Left colon (tissue), 2 donors: ENCODE measurements at regions of chr2 and their contacts with region 1.

Region 1: DNA sequence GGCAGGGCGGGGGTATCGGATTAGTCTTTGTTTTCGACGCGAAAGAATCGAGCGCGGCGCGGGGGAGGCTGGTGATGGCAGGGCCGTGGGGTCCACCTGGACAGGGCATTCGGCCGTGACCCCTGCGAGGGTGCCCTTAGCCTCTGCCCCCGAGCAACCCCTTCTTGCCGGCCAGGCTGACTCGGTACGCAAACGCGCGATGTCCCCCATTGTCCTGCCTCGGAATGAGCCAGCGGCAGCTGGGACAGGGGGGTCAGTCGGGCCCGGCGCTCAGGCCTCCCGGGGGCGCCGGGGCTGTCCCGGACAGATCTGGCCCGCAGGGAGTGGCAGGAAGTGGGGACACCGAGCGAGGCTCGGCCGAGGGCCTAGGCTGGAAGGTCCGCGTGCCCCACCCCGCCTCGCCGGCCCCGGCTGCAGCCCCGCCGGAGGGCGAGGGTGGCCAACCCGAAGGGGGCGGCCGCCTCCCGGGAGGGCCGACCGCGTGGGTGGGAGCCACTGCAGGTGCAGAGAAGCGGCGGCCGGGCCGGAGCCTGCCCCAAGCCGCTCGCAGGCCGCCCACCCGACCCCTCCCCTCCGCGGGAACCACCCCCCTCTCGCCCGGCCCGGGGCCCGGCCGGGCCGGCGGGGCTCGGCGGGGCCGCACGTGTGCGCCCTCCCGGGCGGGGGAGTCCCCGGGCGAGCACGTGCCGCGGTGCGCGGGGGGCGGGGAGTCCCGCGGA is at the start of gene TET3:
- DNase-seq: peak; percentile 65 to 74
- ATAC-seq: peak; percentile 48
- total RNA-seq, gene TET3: 21.0 to 29.4 TPM

Region 2: GRCh38 chr2:73926493-73927338 is 57.6 kb before region 1 on chr2 and contains the start of gene DGUOK:
- intact Hi-C with region 1: loop called in 1 of 2 experiments (anchors 5 kb)
- DNase-seq: peak; percentile 98 to 99
- ATAC-seq: peak; percentile 84
- total RNA-seq, gene DGUOK: 47.4 to 52.6 TPM